Sciatic nerve (tissue), 2 donors: ENCODE measurements at regions of chr18 and their contacts with region 1.

Region 1: GRCh38 chr18:32271672-32272208 is 81.9 kb downstream of the MEP1B start:
- DNase-seq: no peak
- ATAC-seq: peak; percentile 79

Region 2: DNA sequence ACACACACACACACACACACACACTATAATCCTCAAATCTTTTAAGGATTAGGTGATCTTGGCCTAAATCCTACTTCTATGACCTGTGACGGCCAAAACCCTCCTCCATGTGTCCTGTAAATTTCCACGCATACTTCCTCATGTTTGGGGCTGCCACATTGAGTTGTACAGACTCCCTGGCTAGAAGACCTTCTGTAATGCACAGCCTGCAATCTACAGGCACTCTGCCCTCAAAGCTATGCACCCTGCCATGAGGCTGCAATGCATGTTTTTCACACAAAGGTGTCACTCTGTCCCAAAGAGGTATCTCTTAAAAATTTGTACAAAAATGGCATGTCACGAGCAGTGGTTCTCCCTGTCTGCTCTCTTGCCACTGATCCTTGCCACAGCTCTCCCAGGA is 560.9 kb before region 1 on chr18:
- intact Hi-C with region 1: no loop called
- DNase-seq: no peak
- ATAC-seq: no peak

Region 3: DNA sequence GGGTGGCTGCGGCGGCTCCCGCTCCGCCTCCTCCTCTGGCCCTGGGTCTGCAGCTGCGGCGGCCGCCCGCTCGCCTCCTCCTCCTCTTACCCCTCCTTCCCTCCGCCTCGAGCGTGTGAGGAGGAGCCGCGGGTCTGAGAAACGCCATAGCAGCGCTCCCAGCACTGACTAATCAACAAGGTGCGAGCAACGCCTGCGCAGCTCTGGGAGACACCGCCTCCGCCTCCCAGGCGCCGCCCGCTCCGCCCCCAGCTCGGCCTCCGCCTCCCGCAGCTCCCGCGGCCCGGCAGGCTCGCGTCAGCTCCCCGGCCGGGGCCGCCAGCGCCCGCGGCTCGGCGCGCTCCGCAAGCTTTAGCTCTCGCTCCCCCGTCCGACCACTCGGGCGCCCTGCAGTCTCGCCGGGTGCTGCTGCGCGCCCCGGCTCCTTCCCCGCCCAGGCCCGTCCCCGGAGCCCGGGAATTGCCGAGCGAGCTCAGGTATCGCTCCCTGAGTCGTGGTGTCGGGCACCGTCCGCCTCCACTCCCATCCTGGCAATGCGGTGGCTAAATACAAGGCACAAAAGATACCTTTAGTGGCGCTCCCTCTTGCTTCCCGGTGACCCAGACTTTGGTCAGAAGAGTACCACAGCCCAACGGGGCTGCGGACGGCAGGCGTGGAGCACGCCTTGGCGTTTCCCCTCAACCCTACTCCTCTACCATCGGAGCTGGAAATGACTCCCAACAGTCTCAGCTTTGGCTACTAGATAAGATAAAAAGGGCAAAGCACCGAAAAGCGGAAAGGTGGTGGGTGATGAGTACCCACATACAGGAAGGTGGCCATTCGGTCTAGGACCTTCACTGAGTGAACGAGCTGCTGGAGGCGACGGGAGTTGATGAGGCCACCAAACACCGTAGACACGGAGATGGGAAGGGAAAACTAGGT is 199.2 kb after region 1 on chr18 and contains the start of gene GAREM1:
- intact Hi-C with region 1: loop called (anchors 5 kb)
- DNase-seq: peak; percentile 96
- ATAC-seq: peak; percentile 97
- total RNA-seq, gene GAREM1: 29.9 TPM

Region 4: DNA sequence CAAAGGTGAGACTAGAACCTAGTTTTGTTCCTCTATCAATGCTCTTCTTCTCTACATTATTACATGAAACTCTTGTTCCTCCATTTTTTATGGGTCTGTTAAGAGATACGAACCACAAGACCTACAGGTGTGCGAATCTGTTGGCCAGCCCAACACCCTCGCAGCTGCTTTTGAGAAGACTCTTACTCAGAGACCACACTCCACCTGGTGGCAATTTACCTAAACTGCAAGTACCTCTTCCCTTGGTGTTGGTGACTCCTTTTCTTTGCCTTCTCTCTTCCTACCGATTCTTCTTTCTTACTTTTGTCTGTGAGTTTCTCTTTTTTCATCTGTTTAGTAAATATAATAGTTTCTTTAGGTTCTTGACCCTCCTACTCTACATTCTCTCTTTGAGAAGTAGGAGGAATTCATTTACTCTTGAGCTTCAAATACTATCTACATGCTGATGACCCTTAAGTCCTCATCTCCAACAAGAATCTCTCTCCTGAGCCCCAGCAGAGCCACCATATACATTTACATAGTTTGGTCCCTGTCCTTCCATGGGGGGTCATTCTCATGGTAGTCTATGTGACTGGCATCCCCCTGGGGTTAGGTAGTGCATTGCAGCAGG is 280.8 kb after region 1 on chr18:
- intact Hi-C with region 1: loop called (anchors 10 kb)
- DNase-seq: peak; percentile 68
- ATAC-seq: peak; percentile 78